ENCODE measurements at regions of chr14 and their contacts with region 1.

Region 1: GRCh38 chr14:65438266-65438933 is 25.9 kb downstream of the FUT8 start:
- DNase-seq: no peak
- H3K4me3 Mint-ChIP-seq: no peak overlapping the region
- H3K27ac Mint-ChIP-seq: peak overlapping the region; percentile 28
- H3K4me1 Mint-ChIP-seq: peaks cover 23% of the 10 kb centered on the region
- H3K27me3 Mint-ChIP-seq: no peaks in the 10 kb centered on the region

Region 2: DNA sequence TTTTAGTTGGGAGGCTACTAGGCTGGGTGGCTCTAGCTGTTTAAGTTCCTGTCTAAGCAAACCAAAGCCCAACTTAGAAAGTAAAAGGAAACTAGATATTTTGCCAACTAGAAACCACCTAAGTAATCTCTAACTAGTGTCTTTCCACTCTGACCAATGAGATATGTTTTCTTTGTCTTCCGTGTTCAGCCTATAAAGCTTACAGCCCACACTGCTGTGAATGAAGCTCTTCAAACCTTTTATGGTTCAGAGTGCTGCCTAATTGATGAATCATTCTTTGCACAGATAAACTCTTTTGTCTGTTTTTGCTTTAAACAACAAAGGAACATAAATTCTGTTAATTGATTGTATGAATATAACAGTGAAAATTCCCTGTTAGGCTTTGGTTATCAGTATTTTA is 40.2 kb after region 1 on chr14:
- CTCF ChIA-PET with region 1: no interaction called
- intact Hi-C with region 1: loop called (anchors 2 kb)
- DNase-seq: peak; percentile 13
- H3K4me3 Mint-ChIP-seq: no peak overlapping the region
- H3K27ac Mint-ChIP-seq: no peak overlapping the region
- H3K4me1 Mint-ChIP-seq: peaks cover 61% of the 10 kb centered on the region
- H3K27me3 Mint-ChIP-seq: no peaks in the 10 kb centered on the region

Measured in activated naive CD4-positive, alpha-beta T cell treated with anti-CD3 and anti-CD28 coated beads for 36 hours (primary cell).